IMR-90 (cell line): ENCODE measurements at regions of chr20 and their contacts with region 1.

Region 1: DNA sequence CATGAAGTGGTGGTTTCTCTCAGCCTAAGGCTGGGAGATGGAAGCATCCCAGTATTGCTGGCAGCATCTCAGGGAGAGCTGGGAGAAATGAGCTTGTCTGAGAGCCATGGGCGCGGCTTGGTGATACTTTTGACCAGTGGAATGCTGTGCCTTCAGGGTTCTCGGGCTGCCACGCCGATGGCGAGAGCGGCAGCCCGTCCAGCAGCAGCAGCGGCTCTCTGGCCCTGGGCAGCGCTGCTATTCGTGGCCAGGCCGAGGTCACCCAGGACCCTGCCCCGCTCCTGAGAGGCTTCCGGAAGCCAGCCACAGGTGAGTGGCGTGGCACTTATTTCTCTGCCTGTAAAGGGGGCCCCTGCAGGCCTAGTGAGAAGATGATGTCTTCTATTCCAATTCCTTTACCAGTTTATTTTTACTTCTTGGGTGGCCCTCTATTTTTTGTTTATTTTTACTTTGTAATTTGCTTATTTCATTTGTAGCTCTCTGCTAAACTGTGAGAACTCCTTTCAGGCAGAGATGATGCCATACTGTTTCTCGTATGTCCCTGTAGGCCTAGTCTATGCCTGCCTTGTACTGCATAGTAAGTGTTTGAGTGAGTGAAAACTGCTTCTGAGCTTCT is 71.7 kb downstream of the ASXL1 start:
- DNase-seq: no peak
- ATAC-seq: peak; percentile 65
- H3K4me3 ChIP-seq: no peak overlapping the region
- H3K27ac ChIP-seq: no peak overlapping the region
- H3K4me1 ChIP-seq: no peaks in the 10 kb centered on the region
- H3K27me3 ChIP-seq: no peaks in the 10 kb centered on the region
- CTCF ChIP-seq: no peak
- POLR2A ChIP-seq: no peak
- RAD21 ChIP-seq: no peak

Region 2: GRCh38 chr20:32240220-32240619 is 189.6 kb before region 1 on chr20:
- CTCF ChIA-PET with region 1: no interaction called
- POLR2A ChIA-PET with region 1: no interaction called
- dilution Hi-C with region 1: no loop called
- in situ Hi-C with region 1: no loop called
- intact Hi-C with region 1: no loop called
- DNase-seq: no peak
- ATAC-seq: no peak
- H3K4me3 ChIP-seq: no peak overlapping the region
- H3K27ac ChIP-seq: no peak overlapping the region
- H3K4me1 ChIP-seq: peaks cover 7% of the 10 kb centered on the region; the same call in 1 of the 2 replicates
- H3K27me3 ChIP-seq: no peaks in the 10 kb centered on the region
- CTCF ChIP-seq: no peak
- POLR2A ChIP-seq: no peak
- RAD21 ChIP-seq: no peak

Region 3: GRCh38 chr20:32382102-32382950 is 47.5 kb before region 1 on chr20:
- CTCF ChIA-PET with region 1: no interaction called
- POLR2A ChIA-PET with region 1: no interaction called
- dilution Hi-C with region 1: no loop called
- in situ Hi-C with region 1: no loop called
- intact Hi-C with region 1: loop called (anchors 1 kb)
- DNase-seq: no peak
- ATAC-seq: no peak
- H3K4me3 ChIP-seq: no peak overlapping the region
- H3K27ac ChIP-seq: no peak overlapping the region
- H3K4me1 ChIP-seq: peaks cover 13% of the 10 kb centered on the region
- H3K27me3 ChIP-seq: no peaks in the 10 kb centered on the region
- CTCF ChIP-seq: no peak
- POLR2A ChIP-seq: no peak
- RAD21 ChIP-seq: no peak